ENCODE measurements at regions of chr2 and their contacts with region 1.

Region 1: DNA sequence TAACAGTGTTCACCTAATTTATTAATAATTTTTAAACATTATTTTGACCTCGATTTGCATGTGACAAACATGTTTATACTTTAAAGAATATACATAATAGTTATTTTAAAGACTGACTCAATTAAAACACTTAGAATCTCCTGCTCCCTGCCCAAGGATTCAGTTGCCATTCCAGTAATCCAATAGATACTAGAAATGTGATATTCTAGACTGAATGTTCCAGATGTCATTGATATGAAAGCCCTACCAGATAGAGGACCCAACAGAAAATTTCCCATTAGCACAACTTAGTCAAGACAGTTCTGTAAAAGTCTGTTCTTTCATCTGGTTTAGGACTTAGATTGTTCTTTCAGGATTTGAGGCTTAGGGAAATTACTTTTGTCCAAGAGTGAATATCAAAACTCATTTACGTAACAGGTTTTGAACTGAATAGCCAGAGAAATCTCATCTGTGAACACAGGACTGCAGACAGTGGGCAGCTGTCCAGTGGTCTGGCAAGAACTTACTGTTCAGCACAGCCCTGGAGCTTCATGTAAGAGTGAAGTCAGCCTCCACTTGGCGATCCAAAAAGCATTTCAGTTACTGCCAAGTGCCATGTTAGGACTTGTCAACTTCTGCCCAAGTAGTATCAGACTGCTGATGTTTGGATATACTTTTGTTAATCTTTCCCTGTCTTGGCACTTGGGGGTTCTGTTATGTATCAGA is 77.5 kb downstream of the OSBPL6 start:
- DNase-seq: peak; percentile 26
- H3K4me3 ChIP-seq: no peak overlapping the region
- H3K27ac ChIP-seq: peak overlapping the region in 2 of 4 donors; percentile 2 to 24
- H3K4me1 ChIP-seq: no peaks in the 10 kb centered on the region
- H3K27me3 ChIP-seq: no peaks in the 10 kb centered on the region
- CTCF ChIP-seq: no peak
- EP300 ChIP-seq: no peak
- POLR2A ChIP-seq: no peak

Region 2: DNA sequence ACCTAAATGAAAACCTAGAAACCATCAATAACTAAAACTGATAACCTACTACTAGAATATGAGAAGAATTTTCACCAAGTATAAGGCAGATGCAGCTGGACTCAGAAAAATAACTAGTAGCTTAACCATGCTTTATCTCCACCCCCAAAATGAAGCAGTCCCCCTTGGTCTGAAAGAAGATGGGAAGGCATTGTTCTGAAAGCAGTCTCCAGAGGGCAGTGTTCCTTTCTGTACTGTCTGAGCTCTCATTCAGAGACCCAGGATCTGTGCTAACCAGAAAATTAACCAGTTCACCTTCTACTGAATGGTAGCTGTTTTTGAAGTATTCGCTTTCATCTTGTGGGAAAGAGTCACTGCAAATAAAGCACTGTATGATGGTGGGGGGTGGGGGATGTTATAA is 472.2 kb before region 1 on chr2:
- in situ Hi-C with region 1: no loop called
- intact Hi-C with region 1: loop called (anchors 5 kb)
- DNase-seq: no peak
- H3K4me3 ChIP-seq: no peak overlapping the region
- H3K27ac ChIP-seq: no peak overlapping the region
- H3K4me1 ChIP-seq: no peaks in the 10 kb centered on the region
- H3K27me3 ChIP-seq: peaks cover 4% of the 10 kb centered on the region
- CTCF ChIP-seq: peak; percentile 26 to 44 (median 29)
- EP300 ChIP-seq: no peak
- POLR2A ChIP-seq: no peak

Measured in transverse colon (tissue), 4 donors.